ENCODE measurements at regions of chr11 and their contacts with region 1.

Region 1: GRCh38 chr11:79160791-79161403 is 279.9 kb downstream of the TENM4 start:
- DNase-seq: peak; percentile 60
- H3K4me3 ChIP-seq: no peak overlapping the region
- H3K27ac ChIP-seq: no peak overlapping the region
- H3K4me1 ChIP-seq: peaks cover 26% of the 10 kb centered on the region
- H3K27me3 ChIP-seq: no peaks in the 10 kb centered on the region
- CTCF ChIP-seq: no peak

Region 2: DNA sequence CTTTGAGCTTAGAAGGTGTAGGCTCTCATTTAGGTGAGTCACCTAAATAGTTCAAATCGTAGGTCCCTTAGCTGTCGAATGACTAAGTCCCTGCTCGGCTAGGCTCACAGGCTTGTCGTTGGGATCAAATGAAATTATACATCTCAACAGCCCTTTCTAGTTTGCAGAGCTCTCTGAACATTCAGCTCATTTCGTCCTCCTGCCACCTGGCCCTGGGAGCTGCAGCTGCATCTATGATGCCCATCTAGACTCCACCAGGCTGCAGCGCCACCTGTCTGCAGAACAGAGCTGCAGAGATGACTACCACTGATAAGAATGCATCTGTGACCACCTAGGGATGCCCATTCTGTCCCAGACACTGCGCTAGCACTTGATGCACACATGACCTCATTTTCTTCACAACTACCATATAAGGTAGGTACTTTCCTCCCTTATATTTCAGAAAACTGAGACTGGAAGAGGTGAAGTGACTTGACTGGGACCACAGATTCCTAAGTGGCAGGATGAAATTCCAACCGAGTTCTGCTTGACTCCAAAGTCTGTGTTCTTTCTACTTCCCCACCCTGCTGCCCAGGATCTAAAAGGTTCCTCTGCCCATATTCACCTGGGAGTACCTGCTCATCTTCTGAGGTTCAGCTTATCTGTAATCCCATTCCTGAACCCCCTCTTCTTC is 445.1 kb before region 1 on chr11:
- CTCF ChIA-PET with region 1: no interaction called
- dilution Hi-C with region 1: no loop called
- in situ Hi-C with region 1: no loop called
- intact Hi-C with region 1: loop called (anchors 10 kb)
- DNase-seq: peak; percentile 95
- H3K4me3 ChIP-seq: no peak overlapping the region
- H3K27ac ChIP-seq: peak overlapping the region; percentile 41
- H3K4me1 ChIP-seq: peaks cover 24% of the 10 kb centered on the region
- H3K27me3 ChIP-seq: no peaks in the 10 kb centered on the region
- CTCF ChIP-seq: peak; percentile 72 to 87

Region 3: DNA sequence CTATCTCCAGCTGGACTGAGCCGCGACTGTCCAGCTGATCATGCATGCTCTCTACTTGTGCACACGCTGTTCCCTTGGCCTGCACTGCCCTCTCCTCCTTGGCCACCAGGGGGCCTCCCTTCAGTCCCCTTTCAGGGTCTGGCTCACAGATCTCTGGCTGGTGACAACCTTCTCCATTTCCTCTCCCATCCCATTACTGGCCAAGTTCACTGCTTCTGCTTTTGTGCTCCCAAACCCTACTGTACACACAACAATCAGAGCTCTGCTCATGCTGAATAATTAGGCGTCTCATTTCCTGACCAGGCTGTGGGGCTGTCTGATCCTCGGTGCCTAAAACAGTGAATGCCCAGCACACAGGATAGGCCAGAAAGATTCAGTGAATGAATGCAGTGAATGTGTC is 362.2 kb before region 1 on chr11:
- CTCF ChIA-PET with region 1: no interaction called
- dilution Hi-C with region 1: no loop called
- in situ Hi-C with region 1: no loop called
- intact Hi-C with region 1: loop called (anchors 2 kb)
- DNase-seq: peak; percentile 11
- H3K4me3 ChIP-seq: no peak overlapping the region
- H3K27ac ChIP-seq: no peak overlapping the region
- H3K4me1 ChIP-seq: peaks cover 19% of the 10 kb centered on the region
- H3K27me3 ChIP-seq: no peaks in the 10 kb centered on the region
- CTCF ChIP-seq: peak; percentile 81 to 83

Region 4: DNA sequence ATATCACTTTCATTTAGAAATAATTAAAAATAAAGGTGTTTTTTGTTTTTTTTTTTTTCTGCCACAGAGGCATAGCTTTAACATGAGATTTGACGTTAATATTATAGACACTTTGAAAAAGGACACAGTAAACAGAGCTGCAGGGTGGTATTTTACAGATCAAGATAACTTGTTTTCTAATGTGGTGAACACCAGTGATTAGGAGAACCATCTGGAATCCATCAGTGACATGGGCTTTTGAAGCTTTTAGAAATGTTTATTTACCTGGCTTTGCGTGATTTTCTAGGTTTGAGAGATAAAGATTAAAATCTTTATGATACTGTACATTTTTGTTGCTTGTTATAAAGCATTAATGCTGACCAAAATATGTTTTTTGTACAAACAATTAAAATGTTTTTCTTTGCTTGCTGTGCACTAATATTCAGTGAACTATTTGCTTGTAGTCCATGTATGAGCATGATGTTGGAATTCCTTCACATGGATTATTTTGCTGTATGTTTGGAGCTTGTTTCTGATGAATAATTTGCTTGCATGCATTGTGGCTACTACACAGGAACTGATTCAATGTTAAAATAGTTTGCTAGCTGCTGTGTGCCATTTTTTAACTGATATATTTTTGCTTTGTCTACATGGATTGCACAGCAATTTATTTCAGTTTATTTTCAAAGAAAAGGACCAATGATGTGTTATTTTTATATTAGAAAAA is 234.1 kb before region 1 on chr11:
- CTCF ChIA-PET with region 1: no interaction called
- dilution Hi-C with region 1: no loop called
- in situ Hi-C with region 1: no loop called
- intact Hi-C with region 1: no loop called
- DNase-seq: no peak
- H3K4me3 ChIP-seq: no peak overlapping the region
- H3K27ac ChIP-seq: no peak overlapping the region
- H3K4me1 ChIP-seq: no peaks in the 10 kb centered on the region
- H3K27me3 ChIP-seq: no peaks in the 10 kb centered on the region
- CTCF ChIP-seq: no peak

Region 5: GRCh38 chr11:78961247-78961646 is 199.7 kb before region 1 on chr11:
- CTCF ChIA-PET with region 1: no interaction called
- dilution Hi-C with region 1: no loop called
- in situ Hi-C with region 1: no loop called
- intact Hi-C with region 1: loop called (anchors 5 kb)
- DNase-seq: peak; percentile 60
- H3K4me3 ChIP-seq: no peak overlapping the region
- H3K27ac ChIP-seq: no peak overlapping the region
- H3K4me1 ChIP-seq: peaks cover 20% of the 10 kb centered on the region
- H3K27me3 ChIP-seq: no peaks in the 10 kb centered on the region
- CTCF ChIP-seq: peak; percentile 88 to 90

Region 6: DNA sequence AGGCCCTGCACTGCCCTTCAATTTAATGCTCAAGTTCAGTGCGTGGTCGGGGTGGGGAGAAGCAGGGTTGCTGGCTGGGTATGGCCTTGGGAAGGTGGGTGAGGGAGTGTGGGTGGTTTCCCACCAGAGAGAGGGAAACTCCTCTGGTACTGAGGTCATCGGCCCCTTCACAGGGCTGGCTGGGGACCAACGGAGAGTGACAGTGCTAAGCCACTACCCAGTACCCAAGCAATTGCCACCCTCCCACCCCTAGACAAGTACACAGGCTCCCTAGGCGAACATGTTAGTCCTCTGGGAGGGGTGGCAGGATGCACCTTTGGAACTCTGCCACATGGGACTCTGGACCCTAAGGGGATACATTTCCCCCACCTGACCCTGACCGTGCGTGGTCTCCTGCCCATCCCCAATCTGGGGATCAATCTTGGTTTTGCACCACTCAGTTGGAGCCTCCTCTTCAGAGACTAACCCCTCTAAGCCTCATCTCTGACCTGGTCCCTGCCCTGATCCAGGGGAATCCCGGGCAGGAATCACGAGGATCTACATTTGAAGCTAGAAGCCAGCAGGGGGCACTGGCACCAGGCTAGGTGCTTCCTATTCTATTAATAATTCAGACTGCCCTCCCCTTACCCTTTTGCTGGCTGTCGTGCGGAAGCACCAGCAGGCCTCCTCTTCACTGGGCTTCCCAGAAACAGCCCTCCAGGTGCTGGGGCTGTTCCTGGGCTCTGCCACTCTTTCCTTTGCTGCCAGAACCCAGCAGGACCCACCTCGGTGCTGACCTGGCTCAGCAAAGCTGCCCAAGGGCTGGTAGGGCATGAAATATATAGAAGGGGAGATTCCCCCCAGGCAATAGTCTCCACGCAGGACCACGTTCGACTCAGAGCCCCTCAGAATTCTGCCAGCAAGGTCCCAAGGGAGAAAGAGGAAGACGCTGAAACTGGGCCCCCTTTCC is 97.8 kb before region 1 on chr11:
- CTCF ChIA-PET with region 1: no interaction called
- dilution Hi-C with region 1: no loop called
- in situ Hi-C with region 1: no loop called
- intact Hi-C with region 1: loop called (anchors 1 kb)
- DNase-seq: peak; percentile 27
- H3K4me3 ChIP-seq: no peak overlapping the region
- H3K27ac ChIP-seq: no peak overlapping the region
- H3K4me1 ChIP-seq: no peaks in the 10 kb centered on the region
- H3K27me3 ChIP-seq: no peaks in the 10 kb centered on the region
- CTCF ChIP-seq: peak; percentile 35 to 55

Region 7: GRCh38 chr11:79092791-79093353 is 68.0 kb before region 1 on chr11:
- CTCF ChIA-PET with region 1: no interaction called
- dilution Hi-C with region 1: loop called (anchors 5 kb)
- in situ Hi-C with region 1: no loop called
- intact Hi-C with region 1: no loop called
- DNase-seq: peak; percentile 100
- H3K4me3 ChIP-seq: no peak overlapping the region
- H3K27ac ChIP-seq: no peak overlapping the region
- H3K4me1 ChIP-seq: peaks cover 17% of the 10 kb centered on the region
- H3K27me3 ChIP-seq: no peaks in the 10 kb centered on the region
- CTCF ChIP-seq: no peak